Heart right ventricle (tissue), 16 donors: ENCODE measurements at regions of chr22 and their contacts with region 1.

Region 1: GRCh38 chr22:17121227-17122195 is at the start of gene TMEM121B:
- DNase-seq: peak; percentile 79 to 85
- ATAC-seq: peak; percentile 77 to 93 (median 86)
- H3K4me3 ChIP-seq: peak within 1 kb of the TSS; percentile 58 to 80 (median 68)
- H3K27ac ChIP-seq: peak within 1 kb of the TSS in 8 of 10 donors; percentile 39 to 82 (median 68)
- H3K4me1 ChIP-seq: peaks cover 3 to 42% (median 23%) of the 10 kb centered on the region in 9 donors
- H3K27me3 ChIP-seq: peaks cover 0 to 31% (median 0%) of the 10 kb centered on the region in 7 donors
- CTCF ChIP-seq: no peak
- total RNA-seq, gene TMEM121B: 1.2 to 3.3 (median 1.9) TPM

Region 2: GRCh38 chr22:17131686-17132085 is 10.2 kb after region 1 on chr22:
- intact Hi-C with region 1: loop called in 1 of 10 experiments (anchors 1 kb)
- DNase-seq: no peak
- ATAC-seq: peak in 7 of 8 donors; percentile 67 to 84 (median 80)
- H3K4me3 ChIP-seq: peak overlapping the region in 4 of 10 donors; percentile 12 to 24 (median 14)
- H3K27ac ChIP-seq: peak overlapping the region in 8 of 10 donors; percentile 33 to 69 (median 54)
- H3K4me1 ChIP-seq: peaks cover 0 to 15% (median 5%) of the 10 kb centered on the region in 9 donors
- H3K27me3 ChIP-seq: no peaks in the 10 kb centered on the region
- CTCF ChIP-seq: peak in 3 of 9 donors; percentile 25 to 33 (median 30)

Region 3: DNA sequence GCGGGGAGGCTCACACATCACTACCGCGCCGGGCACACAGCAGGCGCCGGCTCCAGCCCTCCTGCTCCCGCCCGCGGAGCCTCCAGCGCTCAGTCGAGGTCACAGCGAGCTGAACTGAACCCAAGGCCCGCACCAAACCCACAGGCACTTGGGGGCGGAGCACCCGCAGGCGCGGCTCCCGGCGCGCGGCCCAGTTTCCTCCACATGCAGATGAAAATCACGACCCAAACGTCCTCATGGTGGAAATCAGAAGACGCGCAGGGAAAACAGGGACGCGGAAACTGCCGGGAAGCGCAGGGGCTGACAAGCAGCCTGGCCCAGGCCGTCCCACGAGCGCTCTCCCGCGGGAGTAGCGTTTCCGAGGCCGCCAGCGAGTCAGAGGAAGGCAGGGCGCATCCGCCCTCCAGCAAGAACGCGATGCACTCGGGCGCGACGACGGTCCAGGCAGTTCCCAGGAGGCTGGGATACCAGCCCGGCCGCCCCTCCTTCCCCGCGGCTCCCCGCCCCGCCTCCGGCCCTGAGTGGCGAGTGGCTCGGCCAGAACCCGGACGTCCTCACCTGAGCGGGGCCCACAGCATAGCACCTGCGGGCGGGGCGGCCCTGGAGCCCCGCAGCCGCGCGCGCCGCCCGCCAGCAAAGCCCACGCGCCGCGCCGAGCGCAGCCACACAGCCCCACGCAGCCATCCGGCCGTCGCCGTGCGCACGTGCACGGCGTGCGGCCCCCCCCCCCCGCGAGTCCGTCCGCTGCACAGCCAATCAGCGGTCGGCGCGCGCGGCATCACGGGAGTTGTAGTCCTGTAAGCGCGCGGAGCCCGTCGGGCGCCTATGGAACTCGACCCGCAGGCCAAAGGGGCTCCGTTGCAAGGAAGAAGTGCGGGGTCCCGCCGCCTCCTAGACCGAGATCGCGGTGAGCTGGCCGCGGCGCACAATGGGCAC is 37.3 kb after region 1 on chr22 and contains the start of gene HDHD5:
- intact Hi-C with region 1: loop called in 5 of 10 experiments (anchors 2 to 10 kb)
- DNase-seq: peak; percentile 91 to 92
- ATAC-seq: peak; percentile 90 to 96 (median 93)
- H3K4me3 ChIP-seq: peak within 1 kb of the TSS; percentile 58 to 87 (median 74)
- H3K27ac ChIP-seq: peak within 1 kb of the TSS; percentile 86 to 97 (median 92)
- H3K4me1 ChIP-seq: peaks cover 6 to 51% (median 30%) of the 10 kb centered on the region in 9 donors
- H3K27me3 ChIP-seq: no peaks in the 10 kb centered on the region
- CTCF ChIP-seq: peak in 2 of 9 donors; percentile 7 to 17
- total RNA-seq, gene HDHD5: 42.8 to 59.2 (median 50.3) TPM

Region 4: GRCh38 chr22:17164392-17165024 is 43.0 kb after region 1 on chr22:
- intact Hi-C with region 1: loop called in 6 of 10 experiments (anchors 2 to 10 kb)
- DNase-seq: no peak
- ATAC-seq: no peak
- H3K4me3 ChIP-seq: no peak overlapping the region
- H3K27ac ChIP-seq: no peak overlapping the region
- H3K4me1 ChIP-seq: peaks cover 4 to 27% (median 11%) of the 10 kb centered on the region in 9 donors
- H3K27me3 ChIP-seq: no peaks in the 10 kb centered on the region
- CTCF ChIP-seq: peak in 1 of 9 donors; percentile 15